Psoas muscle (tissue), 8 donors: ENCODE measurements at regions of chr20 and their contacts with region 1.

Region 1: GRCh38 chr20:41617931-41618806 is at the start of gene CHD6:
- DNase-seq: peak; percentile 100
- ATAC-seq: peak; percentile 98 to 100 (median 99)
- H3K4me3 ChIP-seq: peak within 1 kb of the TSS; percentile 79
- H3K27ac ChIP-seq: peak within 1 kb of the TSS; percentile 80
- H3K4me1 ChIP-seq: peaks cover 26% of the 10 kb centered on the region
- H3K27me3 ChIP-seq: no peaks in the 10 kb centered on the region
- CTCF ChIP-seq: no peak
- total RNA-seq, gene CHD6: 17.2 to 30.4 (median 19.5) TPM

Region 2: GRCh38 chr20:41453010-41453950 is 164.9 kb before region 1 on chr20:
- intact Hi-C with region 1: no loop called
- DNase-seq: peak in 1 of 2 donors; percentile 66
- ATAC-seq: peak; percentile 75 to 89 (median 82)
- H3K4me3 ChIP-seq: peak overlapping the region; percentile 27
- H3K27ac ChIP-seq: peak overlapping the region; percentile 91
- H3K4me1 ChIP-seq: peaks cover 19% of the 10 kb centered on the region
- H3K27me3 ChIP-seq: no peaks in the 10 kb centered on the region
- CTCF ChIP-seq: no peak

Region 3: GRCh38 chr20:41509316-41510200 is 108.6 kb before region 1 on chr20:
- intact Hi-C with region 1: loop called in 1 of 2 experiments (anchors 10 kb)
- DNase-seq: peak; percentile 57 to 81
- ATAC-seq: peak; percentile 89 to 95 (median 90)
- H3K4me3 ChIP-seq: peak overlapping the region; percentile 8
- H3K27ac ChIP-seq: peak overlapping the region; percentile 65
- H3K4me1 ChIP-seq: peaks cover 47% of the 10 kb centered on the region
- H3K27me3 ChIP-seq: no peaks in the 10 kb centered on the region
- CTCF ChIP-seq: no peak

Region 4: GRCh38 chr20:41524980-41525613 is 93.1 kb before region 1 on chr20:
- intact Hi-C with region 1: loop called in 1 of 2 experiments (anchors 10 kb)
- DNase-seq: peak; percentile 60 to 67
- ATAC-seq: peak in 3 of 4 donors; percentile 49 to 65 (median 53)
- H3K4me3 ChIP-seq: no peak overlapping the region
- H3K27ac ChIP-seq: no peak overlapping the region
- H3K4me1 ChIP-seq: peaks cover 16% of the 10 kb centered on the region
- H3K27me3 ChIP-seq: no peaks in the 10 kb centered on the region
- CTCF ChIP-seq: no peak

Region 5: DNA sequence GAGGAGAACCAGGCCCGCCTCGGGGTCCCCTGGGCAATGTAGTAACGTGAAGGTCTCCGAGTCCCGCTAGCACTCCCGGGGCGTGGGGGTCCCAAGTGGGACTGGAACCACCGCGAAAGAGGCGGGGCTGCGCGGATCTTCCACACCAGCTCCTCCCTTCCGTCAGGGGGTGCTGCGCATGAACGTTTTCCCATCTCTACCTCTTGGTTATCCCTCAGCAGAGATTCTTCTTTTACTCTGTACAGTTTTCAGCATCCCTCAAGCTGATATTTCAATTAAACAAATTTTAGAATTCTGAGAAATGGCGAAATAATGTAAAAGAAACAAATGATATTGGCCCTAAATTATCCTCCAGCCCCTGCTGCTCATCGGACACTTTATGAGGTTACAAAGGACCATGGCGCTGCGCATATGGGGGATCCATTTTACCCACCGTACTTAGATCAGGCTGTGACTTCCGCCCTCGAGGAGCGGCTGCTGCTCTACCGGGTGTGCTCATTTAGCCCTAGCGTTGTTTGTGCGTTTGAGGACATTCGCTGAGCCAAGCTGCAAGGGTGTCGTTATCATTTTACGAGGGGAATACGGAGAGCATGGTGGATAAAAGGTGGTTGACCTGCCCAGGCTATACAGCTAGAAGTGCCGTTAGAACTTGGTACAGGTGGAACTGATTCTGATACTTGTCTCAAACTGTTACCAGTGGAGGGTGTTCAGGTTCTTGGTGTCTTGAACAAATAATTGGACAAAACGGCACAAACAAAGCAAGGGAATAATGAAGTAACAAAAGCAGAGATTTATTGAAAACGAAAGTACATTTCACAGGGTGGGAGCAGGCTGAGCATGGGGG is 75.2 kb after region 1 on chr20:
- intact Hi-C with region 1: loop called in 1 of 2 experiments (anchors 5 kb)
- DNase-seq: peak; percentile 76 to 89
- ATAC-seq: peak; percentile 92 to 95 (median 94)
- H3K4me3 ChIP-seq: peak overlapping the region; percentile 75
- H3K27ac ChIP-seq: peak overlapping the region; percentile 86
- H3K4me1 ChIP-seq: peaks cover 4% of the 10 kb centered on the region
- H3K27me3 ChIP-seq: no peaks in the 10 kb centered on the region
- CTCF ChIP-seq: peak; percentile 61

Region 6: GRCh38 chr20:41811456-41811855 is 193.3 kb after region 1 on chr20:
- intact Hi-C with region 1: no loop called
- DNase-seq: no peak
- ATAC-seq: no peak
- H3K4me3 ChIP-seq: no peak overlapping the region
- H3K27ac ChIP-seq: no peak overlapping the region
- H3K4me1 ChIP-seq: no peaks in the 10 kb centered on the region
- H3K27me3 ChIP-seq: no peaks in the 10 kb centered on the region
- CTCF ChIP-seq: no peak